ENCODE measurements at regions of chr5 and their contacts with region 1.

Region 1: DNA sequence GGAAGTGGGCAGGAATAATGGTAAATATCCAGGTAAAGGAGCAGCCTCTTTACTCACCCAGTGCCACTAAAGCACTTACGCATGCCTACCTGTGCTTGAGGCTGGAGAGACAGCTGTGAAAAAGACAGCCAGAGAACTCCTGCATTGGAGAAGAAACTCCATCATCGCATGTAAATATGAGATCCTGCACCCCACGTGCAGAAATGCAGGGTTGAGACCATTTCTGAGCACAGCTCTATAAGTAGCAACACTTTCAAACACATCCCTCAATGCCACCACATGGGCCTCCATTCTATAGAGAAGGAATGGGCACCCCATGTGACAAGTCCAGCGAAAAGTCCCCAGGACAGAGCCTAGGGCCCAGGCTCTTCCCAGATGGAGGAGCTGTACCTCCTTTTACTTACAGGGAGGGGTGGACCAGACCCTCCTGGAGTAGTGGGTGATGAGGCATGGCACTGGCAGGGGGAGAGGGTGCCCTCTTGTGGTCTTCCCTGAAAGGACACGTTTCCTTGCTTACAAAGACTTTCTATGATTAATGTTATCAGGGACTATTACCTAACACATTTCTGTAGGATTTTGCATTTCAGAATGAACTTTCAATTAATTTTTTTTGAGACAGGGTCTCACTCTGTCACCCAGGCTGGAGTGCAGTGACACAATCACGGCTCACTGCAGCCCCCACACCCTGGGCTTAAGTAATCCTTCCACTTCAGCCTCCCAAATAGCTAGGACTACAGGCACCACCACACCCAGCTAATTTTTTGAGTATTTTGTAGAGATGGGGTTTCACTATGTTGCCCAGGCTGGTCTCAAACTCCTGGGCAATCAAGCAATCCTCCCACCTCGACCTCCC is 55.3 kb upstream of the IL17B start:
- DNase-seq: peak; percentile 64
- H3K4me3 ChIP-seq: no peak overlapping the region
- H3K27ac ChIP-seq: no peak overlapping the region
- H3K4me1 ChIP-seq: peaks cover 14% of the 10 kb centered on the region
- H3K27me3 ChIP-seq: no peaks in the 10 kb centered on the region
- CTCF ChIP-seq: peak; percentile 82 to 85
- POLR2A ChIP-seq: no peak

Region 2: GRCh38 chr5:149317281-149318048 is 116.9 kb before region 1 on chr5:
- CTCF ChIA-PET with region 1: interaction called, 22 read pairs
- POLR2A ChIA-PET with region 1: no interaction called
- dilution Hi-C with region 1: no loop called
- intact Hi-C with region 1: loop called (anchors 1 kb)
- DNase-seq: peak; percentile 62
- H3K4me3 ChIP-seq: no peak overlapping the region
- H3K27ac ChIP-seq: no peak overlapping the region
- H3K4me1 ChIP-seq: peaks cover 22% of the 10 kb centered on the region
- H3K27me3 ChIP-seq: no peaks in the 10 kb centered on the region
- CTCF ChIP-seq: peak; percentile 51 to 64
- POLR2A ChIP-seq: no peak

Region 3: DNA sequence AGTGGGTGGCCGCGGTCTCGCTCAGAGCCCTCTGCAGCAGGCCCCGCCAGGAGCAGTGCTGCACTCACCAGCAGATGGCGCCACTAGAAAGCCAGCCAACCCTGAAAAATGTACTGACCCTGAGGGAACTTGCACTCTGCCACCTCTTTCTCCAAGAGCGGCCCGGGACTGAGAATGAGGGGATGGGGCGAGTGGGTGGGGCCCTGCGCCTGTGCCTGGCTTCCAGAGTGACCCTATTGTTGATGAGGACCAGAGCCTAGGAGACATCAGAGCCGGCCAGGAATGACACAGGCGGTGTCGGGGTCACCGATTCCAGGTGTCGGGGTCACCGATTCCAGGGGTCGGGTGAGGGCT is 52.4 kb before region 1 on chr5:
- CTCF ChIA-PET with region 1: interaction called, 79 read pairs
- POLR2A ChIA-PET with region 1: no interaction called
- dilution Hi-C with region 1: no loop called
- intact Hi-C with region 1: loop called (anchors 1 kb)
- DNase-seq: peak; percentile 60
- H3K4me3 ChIP-seq: no peak overlapping the region
- H3K27ac ChIP-seq: no peak overlapping the region
- H3K4me1 ChIP-seq: no peaks in the 10 kb centered on the region
- H3K27me3 ChIP-seq: no peaks in the 10 kb centered on the region
- CTCF ChIP-seq: peak; percentile 86 to 97
- POLR2A ChIP-seq: no peak

Region 4: DNA sequence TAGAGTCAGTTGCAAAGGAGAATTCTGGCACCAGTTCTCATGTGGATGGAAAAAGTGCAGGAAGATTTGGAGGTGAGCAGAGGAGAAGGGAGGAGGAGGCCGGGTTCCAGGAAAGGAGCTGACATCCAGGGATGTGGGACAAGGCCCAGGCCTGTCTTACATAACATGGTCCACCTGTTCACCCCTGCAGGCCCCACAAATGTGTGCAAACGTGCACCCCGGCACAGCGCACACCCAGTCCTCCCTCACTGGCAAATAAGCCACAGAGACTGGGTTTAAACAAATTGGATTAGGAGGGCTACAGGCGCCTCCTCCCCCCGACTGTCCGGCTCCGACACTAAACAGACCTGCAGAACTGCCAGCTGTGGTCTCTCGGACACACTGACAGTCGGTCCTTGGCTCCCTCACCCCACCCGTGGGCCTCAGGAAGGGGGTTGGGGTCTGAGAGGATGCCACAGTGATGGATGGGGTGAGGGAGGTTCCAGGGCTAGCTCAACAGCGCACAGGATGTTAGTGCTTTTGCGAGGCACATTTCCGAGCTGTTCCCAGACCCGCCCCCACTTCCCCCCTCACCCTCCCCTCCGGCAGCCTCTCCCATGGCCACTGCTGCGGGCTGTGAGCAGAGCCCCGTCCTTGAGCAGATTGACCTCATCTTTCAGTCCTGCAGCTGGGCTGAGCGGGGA is 11.9 kb before region 1 on chr5:
- CTCF ChIA-PET with region 1: interaction called, 10 read pairs
- POLR2A ChIA-PET with region 1: no interaction called
- dilution Hi-C with region 1: no loop called
- intact Hi-C with region 1: no loop called
- DNase-seq: peak; percentile 63
- H3K4me3 ChIP-seq: no peak overlapping the region
- H3K27ac ChIP-seq: no peak overlapping the region
- H3K4me1 ChIP-seq: peaks cover 10% of the 10 kb centered on the region
- H3K27me3 ChIP-seq: no peaks in the 10 kb centered on the region
- CTCF ChIP-seq: no peak
- POLR2A ChIP-seq: no peak

Region 5: GRCh38 chr5:149464796-149465489 is 30.6 kb after region 1 on chr5:
- CTCF ChIA-PET with region 1: no interaction called
- POLR2A ChIA-PET with region 1: no interaction called
- dilution Hi-C with region 1: no loop called
- intact Hi-C with region 1: no loop called
- DNase-seq: peak; percentile 93
- H3K4me3 ChIP-seq: no peak overlapping the region
- H3K27ac ChIP-seq: peak overlapping the region; percentile 39
- H3K4me1 ChIP-seq: peaks cover 20% of the 10 kb centered on the region
- H3K27me3 ChIP-seq: no peaks in the 10 kb centered on the region
- CTCF ChIP-seq: no peak
- POLR2A ChIP-seq: no peak

Region 6: GRCh38 chr5:149551200-149552037 is 117.0 kb after region 1 on chr5 and contains the start of gene CSNK1A1:
- CTCF ChIA-PET with region 1: interaction called, 25 read pairs
- POLR2A ChIA-PET with region 1: no interaction called
- dilution Hi-C with region 1: no loop called
- intact Hi-C with region 1: no loop called
- DNase-seq: peak; percentile 99
- H3K4me3 ChIP-seq: peak within 1 kb of the TSS; percentile 81 to 97 (median 85)
- H3K27ac ChIP-seq: peak within 1 kb of the TSS; percentile 91
- H3K4me1 ChIP-seq: peaks cover 31% of the 10 kb centered on the region
- H3K27me3 ChIP-seq: no peaks in the 10 kb centered on the region
- CTCF ChIP-seq: peak; percentile 66 to 71
- POLR2A ChIP-seq: peak; percentile 94
- total RNA-seq, gene CSNK1A1: 253 and 259 TPM in 2 replicates

Region 7: GRCh38 chr5:149878039-149878747 is 443.8 kb after region 1 on chr5:
- CTCF ChIA-PET with region 1: no interaction called
- POLR2A ChIA-PET with region 1: no interaction called
- dilution Hi-C with region 1: no loop called
- intact Hi-C with region 1: no loop called
- DNase-seq: peak; percentile 52
- H3K4me3 ChIP-seq: no peak overlapping the region
- H3K27ac ChIP-seq: no peak overlapping the region
- H3K4me1 ChIP-seq: peaks cover 6% of the 10 kb centered on the region
- H3K27me3 ChIP-seq: no peaks in the 10 kb centered on the region
- CTCF ChIP-seq: no peak
- POLR2A ChIP-seq: no peak

Region 8: GRCh38 chr5:150058480-150059126 is 624.2 kb after region 1 on chr5:
- CTCF ChIA-PET with region 1: no interaction called
- POLR2A ChIA-PET with region 1: no interaction called
- dilution Hi-C with region 1: no loop called
- intact Hi-C with region 1: no loop called
- DNase-seq: no peak
- H3K4me3 ChIP-seq: no peak overlapping the region
- H3K27ac ChIP-seq: no peak overlapping the region
- H3K4me1 ChIP-seq: no peaks in the 10 kb centered on the region
- H3K27me3 ChIP-seq: no peaks in the 10 kb centered on the region
- CTCF ChIP-seq: no peak
- POLR2A ChIP-seq: no peak

Measured in endothelial cell of umbilical vein (primary cell).